ENCODE measurements at regions of chr17 and their contacts with region 1.

Region 1: DNA sequence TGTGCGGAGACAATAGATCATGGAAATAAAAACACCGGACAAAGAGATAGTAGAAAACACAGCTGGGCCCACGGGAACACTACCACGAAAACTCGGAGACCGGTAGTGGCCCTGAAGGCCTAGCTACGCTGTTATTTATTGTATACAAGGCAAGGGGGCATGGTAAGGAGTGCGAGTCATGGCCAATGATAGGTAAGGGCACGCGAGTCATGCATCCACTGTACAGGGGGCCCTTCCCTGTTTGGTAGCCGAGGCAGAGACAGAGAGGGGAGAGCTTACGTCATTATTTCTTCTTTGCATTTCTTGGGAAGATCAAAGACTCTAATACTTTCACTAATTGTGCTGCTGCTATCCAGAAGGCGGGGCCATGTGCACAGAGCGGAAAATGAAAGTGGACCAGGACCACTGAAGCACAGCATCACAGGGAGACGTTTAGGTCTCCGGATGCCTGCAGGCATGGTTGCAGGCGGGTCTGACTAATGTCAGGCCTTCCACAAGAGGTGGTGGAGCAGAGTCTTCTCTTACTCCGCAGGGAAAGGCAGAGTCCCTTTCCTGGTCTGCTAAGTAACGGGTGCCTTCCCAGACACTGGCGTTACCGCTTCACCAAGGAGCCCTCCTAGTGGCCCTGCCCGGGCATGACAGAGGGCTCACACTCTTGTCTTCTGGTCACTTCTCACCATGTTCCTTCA is 74.4 kb upstream of the ARL4D start:
- DNase-seq: no peak
- ATAC-seq: peak; percentile 38; the same call in 1 of the 2 replicates
- H3K4me3 ChIP-seq: no peak overlapping the region
- H3K27ac ChIP-seq: no peak overlapping the region
- H3K4me1 ChIP-seq: no peaks in the 10 kb centered on the region
- H3K27me3 ChIP-seq: no peaks in the 10 kb centered on the region
- CTCF ChIP-seq: no peak

Region 2: DNA sequence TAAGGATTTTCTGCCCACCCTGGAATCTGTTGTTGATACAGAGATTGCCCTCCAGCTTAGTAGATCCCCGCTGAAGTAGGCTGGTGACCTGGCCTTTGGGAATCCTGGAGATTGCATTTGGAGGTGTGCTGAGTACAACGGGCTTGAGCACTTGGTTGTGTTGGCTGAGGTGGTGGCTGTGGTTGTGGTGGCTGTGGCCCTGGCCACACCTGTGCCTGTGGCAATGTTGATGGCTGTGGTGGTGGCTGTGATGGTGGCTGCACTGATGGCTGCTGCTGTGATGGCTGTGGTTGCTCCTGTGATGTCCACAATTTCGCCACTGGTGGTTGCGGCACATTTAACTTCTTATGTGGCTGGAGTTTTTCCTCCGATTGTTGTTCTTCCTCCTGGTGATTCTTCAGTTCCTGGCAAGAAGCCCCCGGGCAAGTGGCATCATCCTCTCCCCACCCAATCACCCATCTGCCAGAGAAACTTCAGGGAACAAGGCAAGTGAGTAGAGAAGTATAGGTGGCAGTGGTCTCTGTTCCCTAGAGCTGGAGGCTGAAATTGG is 100.1 kb before region 1 on chr17:
- CTCF ChIA-PET with region 1: no interaction called
- POLR2A ChIA-PET with region 1: interaction called, 14 read pairs
- in situ Hi-C with region 1: no loop called
- intact Hi-C with region 1: no loop called
- DNase-seq: no peak
- ATAC-seq: no peak
- H3K4me3 ChIP-seq: no peak overlapping the region
- H3K27ac ChIP-seq: no peak overlapping the region
- H3K4me1 ChIP-seq: no peaks in the 10 kb centered on the region
- H3K27me3 ChIP-seq: no peaks in the 10 kb centered on the region
- CTCF ChIP-seq: no peak

Region 3: DNA sequence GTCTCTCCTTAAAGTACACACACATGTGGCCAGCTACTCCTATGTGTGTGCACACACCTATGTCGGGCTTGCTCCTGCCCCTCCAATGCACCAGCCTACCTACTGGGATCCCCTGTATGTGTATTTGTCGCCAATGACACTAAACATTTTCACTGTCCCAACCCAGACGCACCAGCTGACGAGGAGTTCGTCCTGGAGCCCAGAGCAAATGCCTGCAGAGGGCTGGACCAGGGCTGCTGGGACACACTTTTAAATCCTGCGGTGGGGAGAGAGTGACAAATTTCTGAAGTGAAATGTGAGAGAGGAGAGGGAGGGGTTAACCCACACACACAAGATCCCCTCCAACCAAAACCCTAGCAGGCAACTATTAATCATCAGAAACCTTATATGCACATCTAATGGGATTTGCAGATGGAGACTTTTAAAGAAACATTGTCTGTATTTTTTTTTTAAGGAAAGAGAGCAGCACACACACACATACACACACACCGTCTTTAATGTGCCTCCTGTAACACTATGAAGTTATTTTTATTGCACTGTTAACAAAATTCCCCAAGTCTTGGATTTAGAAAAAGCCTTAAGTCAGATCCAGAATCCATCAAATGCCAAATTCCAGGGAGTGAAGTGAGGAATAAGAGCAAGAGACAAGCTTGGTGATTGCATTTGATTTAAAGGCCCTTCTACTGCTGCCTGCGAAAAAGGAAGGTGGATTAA is 337.5 kb after region 1 on chr17 and contains the start of gene MEOX1:
- CTCF ChIA-PET with region 1: no interaction called
- POLR2A ChIA-PET with region 1: no interaction called
- in situ Hi-C with region 1: no loop called
- intact Hi-C with region 1: no loop called
- DNase-seq: no peak
- ATAC-seq: no peak
- H3K4me3 ChIP-seq: no peak within 1 kb of the TSS
- H3K27ac ChIP-seq: no peak within 1 kb of the TSS
- H3K4me1 ChIP-seq: no peaks in the 10 kb centered on the region; the same call in 1 of the 2 replicates
- H3K27me3 ChIP-seq: no peaks in the 10 kb centered on the region
- CTCF ChIP-seq: no peak
- total RNA-seq, gene MEOX1: 0.21 TPM

Measured in Panc1 (cell line).